ENCODE measurements at regions of chr1 and their contacts with region 1.

Region 1: GRCh38 chr1:109282952-109283747 is at the start of gene PSRC1:
- DNase-seq: peak; percentile 96
- ATAC-seq: peak; percentile 97
- H3K4me3 ChIP-seq: peak within 1 kb of the TSS; percentile 63
- H3K27ac ChIP-seq: peak within 1 kb of the TSS; percentile 93
- H3K4me1 ChIP-seq: peaks cover 5% of the 10 kb centered on the region
- H3K27me3 ChIP-seq: no peaks in the 10 kb centered on the region
- CTCF ChIP-seq: peak; percentile 73
- POLR2A ChIP-seq: peak; percentile 60; the same call in 1 of the 2 replicates
- RAD21 ChIP-seq: peak; percentile 67
- total RNA-seq, gene PSRC1: 34.6 and 36.4 TPM in 2 replicates

Region 2: GRCh38 chr1:109208836-109209463 is 74.2 kb before region 1 on chr1:
- CTCF ChIA-PET with region 1: no interaction called
- POLR2A ChIA-PET with region 1: no interaction called
- dilution Hi-C with region 1: no loop called
- in situ Hi-C with region 1: no loop called
- intact Hi-C with region 1: no loop called
- DNase-seq: peak; percentile 53
- ATAC-seq: 0 out of 2 replicates have a peak, but pooled peaks have one; percentile 9
- H3K4me3 ChIP-seq: no peak overlapping the region; the same call in 1 of the 2 replicates
- H3K27ac ChIP-seq: no peak overlapping the region
- H3K4me1 ChIP-seq: peaks cover 9% of the 10 kb centered on the region
- H3K27me3 ChIP-seq: no peaks in the 10 kb centered on the region
- CTCF ChIP-seq: no peak
- POLR2A ChIP-seq: no peak
- RAD21 ChIP-seq: no peak

Region 3: DNA sequence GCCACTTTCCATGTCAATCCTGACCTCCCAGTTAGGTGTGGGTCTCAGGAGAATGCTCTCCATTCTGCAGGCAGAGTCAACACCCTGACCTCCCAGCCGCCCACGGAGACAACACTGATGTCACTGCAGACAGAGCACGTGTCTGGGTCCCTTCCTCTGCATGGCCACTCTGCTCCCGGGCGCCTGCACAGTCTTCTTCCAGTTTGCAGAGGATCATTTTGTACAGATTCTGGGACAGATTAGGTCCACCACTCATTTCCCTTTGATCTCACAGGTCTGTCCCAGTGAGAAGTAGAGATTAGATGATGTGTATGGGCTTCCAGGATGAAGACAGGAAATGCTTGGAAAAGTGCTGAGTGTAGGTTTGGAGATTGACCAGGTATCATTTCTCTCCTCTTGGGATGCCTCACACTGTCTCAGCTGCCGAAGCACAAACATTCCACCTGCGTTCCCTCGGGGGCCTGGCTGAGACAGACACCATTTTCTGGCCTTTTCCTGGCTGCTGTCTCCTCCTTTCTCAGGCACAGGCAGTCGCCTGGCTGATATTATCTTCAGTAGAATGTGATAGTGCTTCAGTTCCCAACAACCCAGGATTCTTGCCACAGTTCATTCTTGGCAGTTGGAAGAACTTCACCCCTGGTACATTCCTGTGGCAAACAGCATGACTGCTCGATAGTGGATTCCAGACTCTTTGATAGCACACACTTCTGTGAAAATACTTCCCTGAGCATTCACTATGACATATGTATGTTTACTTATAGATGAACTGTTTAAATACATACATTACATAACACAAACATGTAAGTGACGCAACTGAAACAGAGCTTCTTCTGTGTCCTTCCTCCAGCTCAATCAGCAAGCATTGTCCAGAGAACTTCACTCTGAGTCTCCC is 15.8 kb after region 1 on chr1:
- CTCF ChIA-PET with region 1: no interaction called
- POLR2A ChIA-PET with region 1: interaction called, 3 read pairs
- dilution Hi-C with region 1: no loop called
- in situ Hi-C with region 1: no loop called
- intact Hi-C with region 1: loop called (anchors 1 kb)
- DNase-seq: peak; percentile 97
- ATAC-seq: peak; percentile 87
- H3K4me3 ChIP-seq: no peak overlapping the region
- H3K27ac ChIP-seq: peak overlapping the region; percentile 86
- H3K4me1 ChIP-seq: peaks cover 26% of the 10 kb centered on the region
- H3K27me3 ChIP-seq: no peaks in the 10 kb centered on the region
- CTCF ChIP-seq: no peak
- POLR2A ChIP-seq: no peak
- RAD21 ChIP-seq: no peak

Region 4: GRCh38 chr1:109370712-109371455 is 87.7 kb after region 1 on chr1:
- CTCF ChIA-PET with region 1: interaction called, 3 read pairs
- POLR2A ChIA-PET with region 1: interaction called, 3 read pairs
- dilution Hi-C with region 1: no loop called
- in situ Hi-C with region 1: no loop called
- intact Hi-C with region 1: loop called (anchors 1 kb)
- DNase-seq: peak; percentile 97
- ATAC-seq: peak; percentile 86
- H3K4me3 ChIP-seq: peak overlapping the region; percentile 18; the same call in 1 of the 2 replicates
- H3K27ac ChIP-seq: peak overlapping the region; percentile 96
- H3K4me1 ChIP-seq: peaks cover 27% of the 10 kb centered on the region
- H3K27me3 ChIP-seq: no peaks in the 10 kb centered on the region
- CTCF ChIP-seq: no peak
- POLR2A ChIP-seq: peak; percentile 53
- RAD21 ChIP-seq: peak; percentile 7

Region 5: GRCh38 chr1:109509176-109510134 is 226.3 kb after region 1 on chr1 and contains the start of gene AMIGO1:
- CTCF ChIA-PET with region 1: no interaction called
- POLR2A ChIA-PET with region 1: no interaction called
- dilution Hi-C with region 1: no loop called
- in situ Hi-C with region 1: no loop called
- intact Hi-C with region 1: no loop called
- DNase-seq: peak; percentile 43
- ATAC-seq: peak; percentile 93
- H3K4me3 ChIP-seq: peak within 1 kb of the TSS; percentile 81
- H3K27ac ChIP-seq: peak within 1 kb of the TSS; percentile 48; the same call in 1 of the 2 replicates
- H3K4me1 ChIP-seq: peaks cover 5% of the 10 kb centered on the region
- H3K27me3 ChIP-seq: peaks cover 9% of the 10 kb centered on the region
- CTCF ChIP-seq: no peak
- POLR2A ChIP-seq: no peak
- RAD21 ChIP-seq: no peak
- total RNA-seq, gene AMIGO1: 1.4 and 1.6 TPM in 2 replicates

Region 6: GRCh38 chr1:109620841-109621286 is 337.7 kb after region 1 on chr1:
- CTCF ChIA-PET with region 1: no interaction called
- POLR2A ChIA-PET with region 1: no interaction called
- dilution Hi-C with region 1: no loop called
- in situ Hi-C with region 1: no loop called
- intact Hi-C with region 1: loop called (anchors 10 kb)
- DNase-seq: peak; percentile 95
- ATAC-seq: peak; percentile 80
- H3K4me3 ChIP-seq: peak overlapping the region; percentile 96
- H3K27ac ChIP-seq: peak overlapping the region; percentile 99
- H3K4me1 ChIP-seq: peaks cover 47% of the 10 kb centered on the region
- H3K27me3 ChIP-seq: no peaks in the 10 kb centered on the region
- CTCF ChIP-seq: no peak
- POLR2A ChIP-seq: peak; percentile 31
- RAD21 ChIP-seq: peak; percentile 3; the same call in 1 of the 2 replicates